ENCODE measurements at regions of chr2 and their contacts with region 1.

Region 1: DNA sequence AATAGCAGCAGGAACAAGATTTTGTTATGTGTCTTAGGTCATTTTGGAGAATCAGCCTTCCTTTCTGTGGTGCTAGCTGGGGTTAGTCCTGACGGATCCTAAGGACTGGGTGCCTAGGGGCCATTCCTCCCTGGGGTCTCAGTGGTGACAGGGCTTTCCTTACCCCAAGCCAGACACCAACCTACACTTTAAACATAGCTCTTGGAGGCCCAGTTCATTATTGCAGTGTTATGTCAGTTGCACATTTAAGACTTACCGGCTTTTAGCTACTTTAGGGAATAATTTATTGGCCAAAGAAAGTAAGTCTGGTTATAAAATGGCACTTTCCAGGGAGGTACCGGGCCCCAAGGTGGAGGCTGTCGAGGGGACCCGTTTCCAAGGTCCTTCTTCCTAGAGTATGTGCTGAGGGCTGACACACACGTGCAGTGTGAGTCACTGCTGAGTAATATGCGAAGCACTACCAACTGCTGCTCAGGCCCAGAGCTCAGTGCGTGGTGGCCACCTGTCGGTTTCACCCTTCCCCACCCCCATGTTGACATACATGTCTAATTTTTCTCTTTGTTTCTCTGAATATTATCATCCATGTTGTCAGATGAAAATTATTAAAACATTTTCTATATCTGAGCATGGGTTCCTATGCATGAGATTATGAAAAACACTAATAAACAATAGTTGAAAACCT is 37.0 kb upstream of the GRHL1 start:
- DNase-seq: peak; percentile 60 to 77
- ATAC-seq: peak; percentile 99 to 100
- H3K4me3 ChIP-seq: no peak overlapping the region
- H3K27ac ChIP-seq: peak overlapping the region; percentile 34 to 58; a peak in 5 of 6 replicates
- H3K4me1 ChIP-seq: peaks cover 12% of the 10 kb centered on the region
- CTCF ChIP-seq: peak; percentile 59
- EP300 ChIP-seq: no peak
- POLR2A ChIP-seq: no peak
- RAD21 ChIP-seq: peak; percentile 68 to 74

Region 2: GRCh38 chr2:9843229-9844035 is 71.1 kb before region 1 on chr2 and contains the start of gene TAF1B:
- CTCF ChIA-PET with region 1: interaction called, 4 read pairs
- POLR2A ChIA-PET with region 1: interaction called, 11 read pairs
- DNase-seq: peak; percentile 95 to 96
- ATAC-seq: peak; percentile 96 to 97
- H3K4me3 ChIP-seq: peak within 1 kb of the TSS; percentile 73
- H3K27ac ChIP-seq: peak within 1 kb of the TSS; percentile 95
- H3K4me1 ChIP-seq: peaks cover 18% of the 10 kb centered on the region; the same call in 2 of the 3 replicates
- CTCF ChIP-seq: no peak
- EP300 ChIP-seq: no peak
- POLR2A ChIP-seq: peak; percentile 76
- RAD21 ChIP-seq: no peak
- polyA plus RNA-seq, gene TAF1B: 40.8 and 51.7 TPM in 2 replicates

Region 3: GRCh38 chr2:9889812-9890261 is 24.7 kb before region 1 on chr2:
- CTCF ChIA-PET with region 1: interaction called, 11 read pairs
- POLR2A ChIA-PET with region 1: no interaction called
- DNase-seq: no peak
- ATAC-seq: no peak
- H3K4me3 ChIP-seq: no peak overlapping the region
- H3K27ac ChIP-seq: no peak overlapping the region
- H3K4me1 ChIP-seq: no peaks in the 10 kb centered on the region
- CTCF ChIP-seq: no peak
- EP300 ChIP-seq: no peak
- POLR2A ChIP-seq: no peak
- RAD21 ChIP-seq: no peak

Region 4: DNA sequence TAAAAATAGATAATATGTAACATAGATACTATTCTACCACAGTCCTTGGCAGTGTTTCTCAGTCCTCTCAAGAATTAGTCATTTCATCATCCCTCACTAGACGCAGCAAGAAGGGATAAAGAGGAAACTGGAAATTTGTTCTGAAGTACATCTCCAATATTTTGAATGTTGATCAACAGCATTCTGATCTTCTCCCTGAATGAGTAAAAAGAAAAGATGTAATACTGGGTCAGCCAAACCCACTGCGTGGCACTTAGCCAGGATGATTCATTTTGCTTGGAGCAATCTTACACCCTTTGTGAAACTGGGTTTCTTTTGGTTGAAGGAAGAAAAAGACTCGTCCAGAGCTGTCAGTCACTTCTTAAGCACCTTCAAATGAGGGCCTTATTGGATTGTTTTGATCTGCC is 17.2 kb before region 1 on chr2:
- CTCF ChIA-PET with region 1: interaction called, 11 read pairs
- POLR2A ChIA-PET with region 1: no interaction called
- DNase-seq: peak; percentile 11 to 46
- ATAC-seq: peak; percentile 75 to 84; a peak in 5 of 6 replicates
- H3K4me3 ChIP-seq: no peak overlapping the region
- H3K27ac ChIP-seq: no peak overlapping the region
- H3K4me1 ChIP-seq: peaks cover 18% of the 10 kb centered on the region
- CTCF ChIP-seq: no peak
- EP300 ChIP-seq: no peak
- POLR2A ChIP-seq: no peak
- RAD21 ChIP-seq: no peak

Measured in A549 (cell line).